ENCODE measurements at regions of chr9 and their contacts with region 1.

Region 1: DNA sequence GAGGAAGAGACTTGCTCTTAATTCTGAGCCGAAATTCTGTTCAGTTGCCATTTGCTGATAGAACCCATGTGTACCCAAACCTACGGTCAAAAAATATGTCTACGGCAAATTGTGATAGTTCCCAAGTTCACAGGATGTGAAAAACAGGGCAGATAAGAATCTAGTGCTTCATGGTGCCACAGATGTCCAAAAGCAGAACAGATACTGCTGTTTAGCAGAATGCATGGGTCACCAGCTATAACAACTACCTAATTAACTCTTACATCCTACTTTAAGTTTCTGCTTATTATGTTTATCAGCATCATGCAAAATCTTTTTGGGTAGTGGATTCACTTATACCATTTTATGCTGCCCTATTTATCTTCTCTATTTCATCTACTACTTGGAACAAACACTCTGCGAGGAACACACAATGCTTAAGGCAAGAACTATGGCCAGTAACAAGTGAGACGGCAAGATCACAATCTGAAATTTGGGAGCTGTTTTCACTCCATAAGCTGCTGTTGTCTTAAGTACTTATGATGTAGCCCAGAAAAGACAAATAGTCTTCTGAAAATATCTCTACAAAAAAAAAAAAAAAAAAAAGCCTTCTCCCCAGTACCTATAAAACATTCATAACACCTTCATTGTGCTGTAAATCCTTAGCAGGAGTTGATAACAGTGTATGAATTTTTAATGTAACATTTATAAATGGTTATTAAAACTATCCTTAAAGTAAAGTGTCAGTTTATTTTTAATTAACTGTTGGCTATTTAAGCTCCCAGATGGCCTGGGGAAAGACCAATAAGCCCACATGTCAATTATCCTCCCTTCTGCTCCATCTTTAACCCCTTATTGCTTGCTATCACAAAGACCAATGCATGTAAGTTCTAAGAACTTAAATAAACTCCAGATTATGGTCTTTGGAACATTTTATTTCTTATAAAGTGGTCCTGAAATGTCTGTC is 232.3 kb downstream of the TLR4 start:
- DNase-seq: no peak
- ATAC-seq: peak; percentile 95
- H3K4me3 Mint-ChIP-seq: peak overlapping the region; percentile 11
- H3K27ac Mint-ChIP-seq: peak overlapping the region; percentile 28
- H3K4me1 Mint-ChIP-seq: peaks cover 24% of the 10 kb centered on the region
- H3K27me3 Mint-ChIP-seq: no peaks in the 10 kb centered on the region
- CTCF ChIP-seq: no peak

Region 2: GRCh38 chr9:117258184-117258866 is 678.1 kb before region 1 on chr9:
- CTCF ChIA-PET with region 1: no interaction called
- POLR2A ChIA-PET with region 1: no interaction called
- intact Hi-C with region 1: no loop called
- DNase-seq: no peak
- ATAC-seq: no peak
- H3K4me3 Mint-ChIP-seq: no peak overlapping the region
- H3K27ac Mint-ChIP-seq: no peak overlapping the region
- H3K4me1 Mint-ChIP-seq: no peaks in the 10 kb centered on the region
- H3K27me3 Mint-ChIP-seq: no peaks in the 10 kb centered on the region
- CTCF ChIP-seq: no peak

Region 3: DNA sequence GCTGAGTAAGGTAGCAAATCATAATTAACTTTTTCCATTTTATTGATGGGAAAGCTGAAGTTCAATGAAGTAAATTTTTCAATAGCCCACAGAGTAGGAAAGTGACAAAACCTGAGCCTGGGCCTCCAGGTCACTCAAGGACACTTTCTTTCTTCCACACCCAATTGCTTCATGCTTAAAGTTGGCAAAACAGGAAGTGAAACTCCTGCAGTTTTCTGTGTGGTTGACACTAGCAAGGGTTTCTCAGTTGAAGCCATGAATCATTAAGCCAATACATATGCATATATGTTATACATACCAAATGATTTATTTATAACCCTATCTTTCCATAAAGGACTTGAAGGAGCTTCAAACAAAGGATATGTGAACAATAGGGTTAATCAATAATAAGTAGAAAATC is 218.4 kb before region 1 on chr9:
- CTCF ChIA-PET with region 1: no interaction called
- POLR2A ChIA-PET with region 1: no interaction called
- intact Hi-C with region 1: loop called (anchors 5 kb)
- DNase-seq: no peak
- ATAC-seq: peak; percentile 91
- H3K4me3 Mint-ChIP-seq: peak overlapping the region; percentile 46
- H3K27ac Mint-ChIP-seq: no peak overlapping the region
- H3K4me1 Mint-ChIP-seq: peaks cover 24% of the 10 kb centered on the region
- H3K27me3 Mint-ChIP-seq: peaks cover 9% of the 10 kb centered on the region
- CTCF ChIP-seq: no peak

Region 4: GRCh38 chr9:117825609-117826347 is 110.7 kb before region 1 on chr9:
- CTCF ChIA-PET with region 1: no interaction called
- POLR2A ChIA-PET with region 1: interaction called, 3 read pairs
- intact Hi-C with region 1: loop called (anchors 5 kb)
- DNase-seq: peak; percentile 26
- ATAC-seq: peak; percentile 96
- H3K4me3 Mint-ChIP-seq: peak overlapping the region; percentile 53
- H3K27ac Mint-ChIP-seq: peak overlapping the region; percentile 22
- H3K4me1 Mint-ChIP-seq: peaks cover 32% of the 10 kb centered on the region
- H3K27me3 Mint-ChIP-seq: peaks cover 15% of the 10 kb centered on the region
- CTCF ChIP-seq: no peak

Measured in activated B cell treated with CpG ODN at 0.5 μM for 24 hours (primary cell).